Heart right ventricle (tissue), 16 donors: ENCODE measurements at regions of chr4 and their contacts with region 1.

Region 1: GRCh38 chr4:176195184-176195978 is at the start of gene SPATA4:
- DNase-seq: peak; percentile 94 to 95
- ATAC-seq: peak; percentile 100
- H3K4me3 ChIP-seq: peak within 1 kb of the TSS; percentile 32 to 77 (median 67)
- H3K27ac ChIP-seq: peak within 1 kb of the TSS in 9 of 10 donors; percentile 41 to 90 (median 82)
- H3K4me1 ChIP-seq: peaks cover 0 to 11% (median 5%) of the 10 kb centered on the region in 9 donors
- H3K27me3 ChIP-seq: peaks cover 0 to 6% (median 0%) of the 10 kb centered on the region in 7 donors
- CTCF ChIP-seq: no peak
- total RNA-seq, gene SPATA4: 0.25 to 0.99 (median 0.49) TPM in 9 of 10 donors, not detected in the other

Region 2: GRCh38 chr4:175758050-175759024 is 437.0 kb before region 1 on chr4:
- intact Hi-C with region 1: no loop called
- DNase-seq: no peak
- ATAC-seq: no peak
- H3K4me3 ChIP-seq: no peak overlapping the region
- H3K27ac ChIP-seq: no peak overlapping the region
- H3K4me1 ChIP-seq: no peaks in the 10 kb centered on the region
- H3K27me3 ChIP-seq: no peaks in the 10 kb centered on the region
- CTCF ChIP-seq: no peak

Region 3: DNA sequence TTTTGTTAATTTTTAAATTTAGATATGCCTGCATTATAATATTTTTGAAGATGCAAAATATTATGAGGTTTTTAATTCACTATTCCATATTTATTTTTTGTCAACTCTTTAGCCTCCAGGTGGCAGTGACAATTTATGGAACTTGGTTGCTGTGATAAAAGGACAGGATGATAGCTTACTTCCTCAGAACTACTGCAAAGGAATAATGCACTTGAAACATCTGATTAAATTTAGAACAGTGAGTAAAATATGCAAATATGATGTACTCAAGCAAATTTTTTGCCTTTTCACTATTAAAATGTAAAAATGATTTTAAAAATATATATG is 45.1 kb before region 1 on chr4:
- intact Hi-C with region 1: no loop called
- DNase-seq: no peak
- ATAC-seq: peak in 2 of 8 donors; percentile 61 to 64
- H3K4me3 ChIP-seq: no peak overlapping the region
- H3K27ac ChIP-seq: no peak overlapping the region
- H3K4me1 ChIP-seq: no peaks in the 10 kb centered on the region
- H3K27me3 ChIP-seq: no peaks in the 10 kb centered on the region
- CTCF ChIP-seq: peak; percentile 13 to 68 (median 44)

Region 4: DNA sequence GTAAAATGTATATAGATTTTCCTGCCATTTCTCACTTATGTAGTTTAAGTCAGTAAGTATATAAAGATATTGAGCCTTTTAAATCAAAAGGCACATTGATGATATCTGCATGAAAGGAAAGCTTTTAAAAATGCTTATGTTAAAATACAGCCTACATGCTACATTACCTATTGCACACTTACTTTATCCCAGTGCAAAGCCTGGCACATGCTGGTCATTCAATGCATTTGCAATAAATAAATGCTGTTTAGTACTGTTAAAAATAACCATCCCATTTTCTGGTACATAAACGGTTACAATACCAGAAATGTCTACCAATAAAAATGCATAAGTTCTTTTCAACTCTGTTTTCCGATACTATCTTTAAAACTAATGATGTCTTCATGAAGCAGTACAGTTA is 22.1 kb after region 1 on chr4:
- intact Hi-C with region 1: no loop called
- DNase-seq: no peak
- ATAC-seq: no peak
- H3K4me3 ChIP-seq: no peak overlapping the region
- H3K27ac ChIP-seq: no peak overlapping the region
- H3K4me1 ChIP-seq: no peaks in the 10 kb centered on the region
- H3K27me3 ChIP-seq: no peaks in the 10 kb centered on the region
- CTCF ChIP-seq: no peak

Region 5: GRCh38 chr4:176230836-176231235 is 35.5 kb after region 1 on chr4:
- intact Hi-C with region 1: loop called in 3 of 10 experiments (anchors 2 to 5 kb)
- DNase-seq: no peak
- ATAC-seq: peak; percentile 64 to 91 (median 77)
- H3K4me3 ChIP-seq: peak overlapping the region in 6 of 10 donors; percentile 8 to 28 (median 20)
- H3K27ac ChIP-seq: peak overlapping the region in 9 of 10 donors; percentile 24 to 75 (median 61)
- H3K4me1 ChIP-seq: peaks cover 0 to 32% (median 18%) of the 10 kb centered on the region in 9 donors
- H3K27me3 ChIP-seq: no peaks in the 10 kb centered on the region
- CTCF ChIP-seq: no peak

Region 6: GRCh38 chr4:176238157-176238610 is 42.8 kb after region 1 on chr4:
- intact Hi-C with region 1: loop called in 3 of 10 experiments (anchors 2 to 5 kb)
- DNase-seq: peak in 1 of 2 donors; percentile 14
- ATAC-seq: peak; percentile 74 to 95 (median 85)
- H3K4me3 ChIP-seq: peak overlapping the region in 5 of 10 donors; percentile 3 to 31 (median 24)
- H3K27ac ChIP-seq: peak overlapping the region; percentile 63 to 92 (median 84)
- H3K4me1 ChIP-seq: peaks cover 0 to 26% (median 12%) of the 10 kb centered on the region in 9 donors
- H3K27me3 ChIP-seq: no peaks in the 10 kb centered on the region
- CTCF ChIP-seq: no peak

Region 7: DNA sequence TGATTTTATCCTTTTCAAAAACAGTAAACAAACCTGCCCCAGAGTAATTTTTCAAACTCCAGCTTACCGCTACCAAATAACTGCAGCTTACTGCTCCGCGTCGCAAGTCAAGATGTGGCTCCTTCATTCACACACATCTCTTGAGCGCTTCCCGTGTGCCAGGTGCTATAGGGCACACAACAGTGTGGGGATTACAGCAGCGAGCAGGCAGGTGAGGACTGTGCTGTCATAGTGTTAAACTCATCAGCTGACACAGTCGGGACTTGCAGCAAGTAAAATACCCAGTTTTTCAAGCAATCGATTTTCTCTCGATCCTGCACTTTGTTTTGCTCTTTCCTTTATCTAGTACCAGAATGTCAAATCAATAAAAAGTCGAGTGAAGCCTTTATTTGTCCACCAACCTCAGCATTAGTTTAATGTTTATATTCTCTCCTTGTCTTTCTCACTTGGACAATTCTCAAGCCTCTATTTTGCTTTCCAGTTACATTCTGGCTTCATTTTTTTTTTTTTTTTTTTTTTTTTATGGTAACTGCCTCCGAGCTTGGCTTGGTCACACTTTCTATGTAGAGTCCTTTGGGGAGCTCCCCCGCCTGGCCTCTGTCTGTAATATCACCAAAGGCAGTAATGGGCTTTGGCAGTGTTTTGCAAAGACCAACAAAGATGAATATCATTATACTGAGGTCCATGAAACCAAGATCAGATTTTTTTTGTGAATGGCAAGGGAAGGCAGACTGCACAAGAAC is 82.0 kb after region 1 on chr4:
- intact Hi-C with region 1: loop called in 4 of 10 experiments (anchors 10 kb)
- DNase-seq: peak; percentile 44 to 51
- ATAC-seq: peak in 7 of 8 donors; percentile 73 to 90 (median 81)
- H3K4me3 ChIP-seq: peak overlapping the region in 2 of 10 donors; percentile 21 to 30
- H3K27ac ChIP-seq: no peak overlapping the region
- H3K4me1 ChIP-seq: peaks cover 0 to 6% (median 0%) of the 10 kb centered on the region in 9 donors
- H3K27me3 ChIP-seq: no peaks in the 10 kb centered on the region
- CTCF ChIP-seq: peak; percentile 13 to 72 (median 54)

Region 8: GRCh38 chr4:176319704-176320339 is 124.4 kb after region 1 on chr4 and contains the start of gene SPCS3:
- intact Hi-C with region 1: loop called in 3 of 10 experiments (anchors 5 to 10 kb)
- DNase-seq: peak; percentile 95 to 96
- ATAC-seq: peak; percentile 97 to 100 (median 99)
- H3K4me3 ChIP-seq: peak within 1 kb of the TSS; percentile 40 to 87 (median 78)
- H3K27ac ChIP-seq: peak within 1 kb of the TSS; percentile 88 to 99 (median 97)
- H3K4me1 ChIP-seq: peaks cover 0 to 53% (median 42%) of the 10 kb centered on the region in 9 donors
- H3K27me3 ChIP-seq: no peaks in the 10 kb centered on the region
- CTCF ChIP-seq: no peak
- total RNA-seq, gene SPCS3: 74.1 to 122 (median 90.9) TPM

Region 9: DNA sequence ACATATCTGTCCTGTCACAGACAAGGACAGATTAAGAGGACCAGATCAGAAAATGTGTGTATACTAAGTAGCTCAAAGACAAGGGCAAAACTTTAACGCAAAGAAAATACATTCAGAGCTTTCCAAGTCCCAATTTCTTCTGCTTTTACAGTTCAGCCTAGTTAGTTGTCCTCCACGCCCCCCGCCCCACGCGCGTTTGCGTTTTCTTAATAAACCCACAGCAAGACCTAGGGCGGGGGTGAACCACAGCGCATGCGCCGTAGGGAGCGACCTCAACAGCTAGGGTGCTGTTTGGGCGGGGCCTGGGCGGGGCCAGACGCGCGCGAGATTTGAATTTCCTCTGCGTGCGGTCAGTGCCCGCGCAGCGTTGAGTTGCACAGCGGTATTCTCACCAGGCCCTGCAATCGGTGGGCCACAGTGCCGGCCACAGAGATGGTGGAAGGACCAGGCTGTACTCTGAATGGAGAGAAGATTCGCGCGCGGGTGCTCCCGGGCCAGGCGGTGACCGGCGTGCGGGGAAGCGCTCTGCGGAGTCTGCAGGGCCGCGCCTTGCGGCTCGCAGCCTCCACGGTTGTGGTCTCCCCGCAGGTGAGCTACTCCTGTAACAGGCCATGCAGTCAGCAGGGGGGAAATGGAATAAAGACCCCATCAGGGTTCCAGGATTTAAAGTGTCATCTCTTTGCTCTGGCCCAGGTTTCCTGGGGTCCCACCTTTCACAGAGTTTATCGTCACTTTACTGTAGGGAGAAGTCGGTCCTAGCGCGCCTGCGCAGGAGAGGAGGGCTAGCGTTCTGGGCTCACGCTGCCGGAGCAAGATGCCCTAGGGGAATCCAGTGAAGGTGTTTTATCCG is 1114.4 kb after region 1 on chr4 and contains the start of gene NEIL3:
- intact Hi-C with region 1: loop called in 1 of 10 experiments (anchors 10 kb)
- DNase-seq: peak; percentile 91 to 94
- ATAC-seq: peak; percentile 97 to 99 (median 98)
- H3K4me3 ChIP-seq: peak within 1 kb of the TSS in 9 of 10 donors; percentile 45 to 79 (median 63)
- H3K27ac ChIP-seq: peak within 1 kb of the TSS in 1 of 10 donors; percentile 64
- H3K4me1 ChIP-seq: peaks cover 0 to 33% (median 9%) of the 10 kb centered on the region in 9 donors
- H3K27me3 ChIP-seq: no peaks in the 10 kb centered on the region
- CTCF ChIP-seq: no peak
- total RNA-seq, gene NEIL3: 0.11 to 0.88 (median 0.38) TPM in 6 of 10 donors, not detected in the others